ENCODE measurements at regions of chr3 and their contacts with region 1.

Region 1: GRCh38 chr3:12598890-12599289 is 42.0 kb downstream of the MKRN2 start:
- DNase-seq: no peak
- H3K4me3 ChIP-seq: no peak overlapping the region
- H3K27ac ChIP-seq: no peak overlapping the region
- H3K4me1 ChIP-seq: no peaks in the 10 kb centered on the region
- H3K27me3 ChIP-seq: no peaks in the 10 kb centered on the region
- CTCF ChIP-seq: no peak
- POLR2A ChIP-seq: no peak

Region 2: DNA sequence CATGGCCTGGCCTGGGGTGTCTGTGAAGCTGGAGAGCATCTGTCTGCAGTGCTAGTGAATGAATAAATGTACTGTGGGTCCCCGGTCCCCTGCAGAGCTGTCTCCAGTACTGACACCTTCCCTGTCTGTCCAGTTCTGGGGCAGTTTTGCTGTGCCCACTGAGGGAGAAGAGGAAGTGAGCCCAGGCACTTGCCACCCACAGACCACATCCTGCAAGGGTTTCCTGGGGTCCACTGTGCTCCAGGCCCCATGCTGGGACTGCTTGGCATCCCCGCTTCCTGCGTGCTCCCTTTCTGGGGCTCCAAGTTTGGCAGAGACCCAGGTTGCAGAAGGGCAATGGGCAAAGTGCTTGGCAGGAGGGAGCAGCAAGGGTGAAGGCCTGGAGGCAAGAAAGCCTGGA is 1798.6 kb after region 1 on chr3:
- intact Hi-C with region 1: loop called (anchors 5 kb)
- DNase-seq: no peak
- H3K4me3 ChIP-seq: no peak overlapping the region
- H3K27ac ChIP-seq: no peak overlapping the region
- H3K4me1 ChIP-seq: peaks cover 17% of the 10 kb centered on the region
- H3K27me3 ChIP-seq: no peaks in the 10 kb centered on the region
- CTCF ChIP-seq: no peak
- POLR2A ChIP-seq: no peak

Measured in vagina (tissue), 2 donors.